ENCODE measurements at regions of chr3 and their contacts with region 1.

Region 1: GRCh38 chr3:155701882-155702465 is 42.9 kb downstream of the PLCH1 start:
- DNase-seq: no peak
- H3K4me3 ChIP-seq: no peak overlapping the region
- H3K27ac ChIP-seq: no peak overlapping the region
- H3K4me1 ChIP-seq: no peaks in the 10 kb centered on the region
- H3K27me3 ChIP-seq: no peaks in the 10 kb centered on the region
- CTCF ChIP-seq: peak; percentile 63 to 76 (median 68)
- EP300 ChIP-seq: no peak
- POLR2A ChIP-seq: no peak

Region 2: DNA sequence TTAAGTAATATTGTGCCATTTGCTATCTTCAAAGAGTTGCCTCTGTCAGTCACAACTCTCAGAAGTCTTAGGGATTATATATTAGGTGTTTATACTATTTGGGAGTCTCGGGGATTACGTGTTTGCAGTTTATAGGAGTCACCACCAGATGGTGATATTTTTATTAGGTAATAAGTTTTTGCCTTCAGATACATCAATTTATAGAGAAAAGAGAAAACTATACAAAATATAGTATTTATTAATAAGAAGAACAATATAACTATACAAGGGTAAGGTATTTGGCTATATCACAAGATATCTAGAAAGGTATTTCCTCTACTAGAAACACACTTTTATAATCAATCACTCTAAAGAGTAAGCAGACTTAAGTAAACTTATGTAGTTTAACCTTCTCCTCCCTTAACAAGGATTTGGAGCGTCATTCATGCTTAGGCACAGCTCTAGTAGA is 1367.0 kb before region 1 on chr3:
- in situ Hi-C with region 1: loop called in 1 of 4 experiments (anchors 25 kb)
- intact Hi-C with region 1: no loop called
- DNase-seq: no peak
- H3K4me3 ChIP-seq: no peak overlapping the region
- H3K27ac ChIP-seq: no peak overlapping the region
- H3K4me1 ChIP-seq: no peaks in the 10 kb centered on the region
- H3K27me3 ChIP-seq: no peaks in the 10 kb centered on the region
- CTCF ChIP-seq: peak; percentile 28 to 61 (median 46)
- EP300 ChIP-seq: no peak
- POLR2A ChIP-seq: no peak

Region 3: DNA sequence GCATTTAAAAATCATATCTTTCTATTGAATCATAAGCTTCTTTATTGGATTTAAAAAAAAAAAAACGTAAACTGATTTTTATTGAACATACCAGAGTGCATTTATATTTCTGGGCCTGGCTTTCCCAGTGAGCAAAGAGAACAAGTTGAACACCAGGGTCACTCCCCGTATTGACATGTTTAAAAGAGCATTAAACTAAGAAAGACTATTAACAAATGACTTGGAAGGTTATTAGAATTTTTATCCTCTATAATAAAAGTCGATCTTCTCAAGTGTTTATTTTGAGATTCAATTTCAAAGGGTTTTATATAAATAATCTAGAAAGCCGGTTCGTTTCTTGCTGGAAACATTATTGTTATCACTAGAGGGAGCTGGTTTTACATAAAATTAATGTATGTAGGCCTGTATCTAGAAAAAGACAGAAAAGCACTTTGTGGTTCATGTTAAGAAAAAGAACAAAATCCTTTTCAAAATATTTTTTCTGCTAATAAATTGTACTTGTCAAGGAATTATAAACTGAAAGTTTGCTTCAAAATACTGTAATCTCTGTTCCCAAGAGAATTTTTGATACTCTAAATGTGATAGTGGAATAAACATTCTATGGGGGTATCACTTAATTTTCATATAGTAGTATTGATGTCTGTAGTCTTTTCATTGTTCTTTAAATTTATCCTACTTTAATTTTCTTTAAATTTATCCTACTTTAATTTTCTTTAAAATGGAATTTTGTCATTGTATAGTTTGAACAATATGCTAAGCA is 943.7 kb before region 1 on chr3:
- in situ Hi-C with region 1: loop called in 1 of 4 experiments (anchors 25 kb)
- intact Hi-C with region 1: no loop called
- DNase-seq: no peak
- H3K4me3 ChIP-seq: no peak overlapping the region
- H3K27ac ChIP-seq: no peak overlapping the region
- H3K4me1 ChIP-seq: no peaks in the 10 kb centered on the region
- H3K27me3 ChIP-seq: no peaks in the 10 kb centered on the region
- CTCF ChIP-seq: peak in 4 of 5 experiments; percentile 21 to 50 (median 38)
- EP300 ChIP-seq: no peak
- POLR2A ChIP-seq: no peak

Region 4: GRCh38 chr3:155352900-155353490 is 349.0 kb before region 1 on chr3:
- in situ Hi-C with region 1: loop called in 1 of 4 experiments (anchors 10 kb)
- intact Hi-C with region 1: loop called (anchors 5 kb)
- DNase-seq: no peak
- H3K4me3 ChIP-seq: no peak overlapping the region
- H3K27ac ChIP-seq: no peak overlapping the region
- H3K4me1 ChIP-seq: no peaks in the 10 kb centered on the region
- H3K27me3 ChIP-seq: no peaks in the 10 kb centered on the region
- CTCF ChIP-seq: peak; percentile 34 to 50 (median 38)
- EP300 ChIP-seq: no peak
- POLR2A ChIP-seq: no peak

Region 5: GRCh38 chr3:155382396-155383042 is 319.5 kb before region 1 on chr3:
- in situ Hi-C with region 1: loop called in 3 of 4 experiments (anchors 10 kb)
- intact Hi-C with region 1: no loop called
- DNase-seq: peak; percentile 76
- H3K4me3 ChIP-seq: no peak overlapping the region
- H3K27ac ChIP-seq: no peak overlapping the region
- H3K4me1 ChIP-seq: no peaks in the 10 kb centered on the region
- H3K27me3 ChIP-seq: no peaks in the 10 kb centered on the region
- CTCF ChIP-seq: peak; percentile 43 to 66 (median 63)
- EP300 ChIP-seq: no peak
- POLR2A ChIP-seq: no peak

Region 6: DNA sequence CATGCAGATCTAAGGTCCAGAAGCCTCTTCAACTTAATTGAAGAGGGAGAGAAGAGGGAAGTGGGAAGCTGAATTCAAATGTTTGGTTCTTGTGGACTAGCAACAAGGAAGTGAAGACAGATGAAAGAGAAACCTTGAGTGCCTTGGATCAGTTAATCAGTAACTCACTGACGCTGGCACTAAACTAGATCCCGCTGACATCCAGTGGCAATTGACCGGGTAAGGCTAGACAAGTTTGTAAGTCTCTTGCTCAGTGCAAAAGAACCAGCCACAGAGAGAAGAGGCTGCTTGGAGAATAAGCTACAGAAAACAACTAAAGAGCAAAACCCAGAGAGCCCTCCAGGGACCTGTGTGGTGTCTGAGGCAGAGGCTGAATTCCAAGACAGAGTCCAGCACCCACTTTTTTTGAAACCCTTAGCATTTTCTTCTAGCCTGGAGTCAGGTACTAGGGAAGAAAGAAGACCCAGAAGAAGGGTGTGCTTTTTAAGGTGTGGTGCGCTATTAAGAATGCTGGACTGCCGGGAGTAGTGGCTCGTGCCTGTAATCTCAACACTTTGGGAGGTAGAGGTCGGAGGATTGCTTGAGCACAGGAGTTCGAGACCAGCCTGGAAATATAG is 36.0 kb after region 1 on chr3:
- in situ Hi-C with region 1: no loop called
- intact Hi-C with region 1: no loop called
- DNase-seq: peak; percentile 76
- H3K4me3 ChIP-seq: peak overlapping the region in 3 of 4 donors; percentile 15 to 39 (median 23)
- H3K27ac ChIP-seq: peak overlapping the region; percentile 79 to 91 (median 89)
- H3K4me1 ChIP-seq: peaks cover 0 to 20% (median 9%) of the 10 kb centered on the region in 4 donors
- H3K27me3 ChIP-seq: peaks cover under 1% of the 10 kb centered on the region
- CTCF ChIP-seq: peak in 1 of 5 experiments; percentile 7
- EP300 ChIP-seq: no peak
- POLR2A ChIP-seq: peak; percentile 81